Heart left ventricle (tissue), 16 donors: ENCODE measurements at regions of chr12 and their contacts with region 1.

Region 1: DNA sequence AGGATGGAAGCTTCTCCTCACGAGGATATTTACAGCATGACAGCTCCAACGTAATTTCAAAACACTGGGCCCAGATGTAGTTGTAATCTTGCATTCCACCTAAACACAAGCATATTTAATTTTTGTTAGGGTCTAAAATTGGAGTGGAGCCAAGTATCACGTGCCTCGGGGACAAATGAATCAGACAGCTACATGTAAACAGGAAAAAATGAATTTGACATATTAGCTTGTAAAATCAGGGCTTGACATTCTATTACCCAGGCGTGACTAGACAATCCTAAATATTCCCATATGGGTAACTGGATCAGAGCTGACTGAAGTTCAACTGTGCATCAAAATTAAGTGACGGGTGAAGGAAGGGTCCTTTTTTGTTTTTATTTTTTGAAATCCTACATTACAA is 59.0 kb downstream of the MDM2 start:
- DNase-seq: no peak
- ATAC-seq: no peak
- H3K4me3 ChIP-seq: no peak overlapping the region
- H3K27ac ChIP-seq: no peak overlapping the region
- H3K4me1 ChIP-seq: no peaks in the 10 kb centered on the region
- H3K27me3 ChIP-seq: no peaks in the 10 kb centered on the region
- CTCF ChIP-seq: no peak
- POLR2A ChIP-seq: no peak

Region 2: GRCh38 chr12:68786929-68787328 is 80.0 kb before region 1 on chr12:
- intact Hi-C with region 1: no loop called
- DNase-seq: no peak
- ATAC-seq: no peak
- H3K4me3 ChIP-seq: no peak overlapping the region
- H3K27ac ChIP-seq: peak overlapping the region in 9 of 12 donors; percentile 12 to 87 (median 44)
- H3K4me1 ChIP-seq: peaks cover 0 to 50% (median 0%) of the 10 kb centered on the region in 12 donors
- H3K27me3 ChIP-seq: no peaks in the 10 kb centered on the region
- CTCF ChIP-seq: no peak
- POLR2A ChIP-seq: no peak

Region 3: GRCh38 chr12:68932961-68933893 is 66.3 kb after region 1 on chr12 and contains the start of gene CPM:
- intact Hi-C with region 1: loop called in 1 of 10 experiments (anchors 10 kb)
- DNase-seq: peak; percentile 69 to 88 (median 77)
- ATAC-seq: peak; percentile 93 to 100 (median 98)
- H3K4me3 ChIP-seq: peak within 1 kb of the TSS; percentile 47 to 80 (median 73)
- H3K27ac ChIP-seq: peak within 1 kb of the TSS; percentile 20 to 81 (median 58)
- H3K4me1 ChIP-seq: peaks cover 0 to 26% (median 7%) of the 10 kb centered on the region in 12 donors
- H3K27me3 ChIP-seq: peaks cover 0 to 20% (median 2%) of the 10 kb centered on the region in 9 donors
- CTCF ChIP-seq: no peak
- POLR2A ChIP-seq: peak; percentile 71 to 93
- total RNA-seq, gene CPM: 2.0 to 25.4 (median 8.8) TPM

Region 4: DNA sequence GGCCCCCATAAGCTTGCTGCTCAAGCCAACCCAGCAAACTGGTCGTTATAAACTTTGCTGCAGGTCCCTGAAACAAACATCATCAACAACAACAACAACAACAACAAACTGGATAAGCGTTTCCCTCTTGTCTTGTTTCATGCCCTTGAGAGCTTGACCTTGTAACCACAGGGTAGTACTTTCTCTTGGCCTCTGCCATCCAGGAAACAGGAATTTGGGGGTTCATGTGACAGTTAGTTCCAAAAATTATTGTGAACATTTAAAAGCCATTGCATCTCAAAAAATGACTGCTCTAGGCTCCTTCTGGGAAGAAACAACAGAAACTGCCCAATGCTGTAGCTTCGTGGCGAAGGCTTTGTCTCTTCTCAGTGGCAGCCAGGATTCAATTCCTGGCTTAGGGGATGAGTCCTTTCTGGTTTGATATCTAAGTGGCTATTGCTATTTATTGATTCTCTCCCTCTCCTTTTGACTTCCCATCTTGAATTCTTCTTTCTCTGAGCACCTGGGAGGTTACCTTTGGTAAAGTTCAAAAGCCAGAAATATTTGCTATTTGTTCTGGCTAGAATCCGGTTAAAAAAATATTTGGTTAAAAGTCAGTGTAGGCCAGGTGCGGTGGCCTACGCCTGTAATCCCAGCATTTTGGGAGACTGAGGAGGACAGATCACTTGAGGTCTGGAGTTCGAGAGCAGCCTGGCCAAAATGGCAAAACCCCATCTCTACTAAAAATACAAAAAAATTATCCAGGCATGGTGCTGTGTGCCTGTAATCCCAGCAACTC is 118.0 kb after region 1 on chr12:
- intact Hi-C with region 1: no loop called
- DNase-seq: no peak
- ATAC-seq: no peak
- H3K4me3 ChIP-seq: no peak overlapping the region
- H3K27ac ChIP-seq: no peak overlapping the region
- H3K4me1 ChIP-seq: no peaks in the 10 kb centered on the region
- H3K27me3 ChIP-seq: no peaks in the 10 kb centered on the region
- CTCF ChIP-seq: no peak
- POLR2A ChIP-seq: no peak

Region 5: DNA sequence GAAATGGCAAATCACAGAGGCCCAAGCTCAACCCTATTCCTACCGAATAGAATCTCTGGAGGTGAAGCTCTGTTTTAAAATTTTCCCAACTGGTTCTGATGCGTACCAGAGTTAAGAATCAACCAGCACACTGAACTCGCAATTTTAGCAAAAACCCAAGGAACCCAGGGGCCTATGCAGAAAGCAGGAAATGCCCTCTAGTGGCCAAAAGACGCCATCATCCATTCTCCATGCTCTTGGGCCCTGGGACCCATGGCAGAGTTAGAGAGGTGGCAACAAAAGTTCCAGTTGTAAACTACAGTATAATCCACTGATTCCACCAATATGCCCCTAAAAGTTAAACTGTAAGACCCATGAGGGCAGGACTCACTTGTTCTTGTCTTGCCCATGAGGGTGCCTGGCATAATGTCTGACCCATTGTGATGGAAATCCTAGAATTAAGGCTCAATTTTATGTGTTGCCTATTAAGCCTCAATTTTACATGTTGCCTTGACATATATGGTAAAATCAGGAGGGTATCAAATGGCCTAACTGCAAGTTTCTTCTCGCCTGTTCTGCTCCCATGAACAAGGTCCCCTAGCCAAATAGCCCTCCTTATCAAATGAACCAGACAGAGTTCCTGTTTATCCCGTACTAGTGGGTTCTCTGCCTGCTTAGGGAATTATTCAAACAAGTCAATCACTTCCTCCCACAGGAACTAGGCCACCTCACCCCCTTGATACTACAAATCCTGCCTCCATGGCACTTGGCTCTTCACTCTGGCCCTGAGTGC is 203.6 kb after region 1 on chr12:
- intact Hi-C with region 1: loop called (anchors 1 to 5 kb)
- DNase-seq: peak in 4 of 5 donors; percentile 43 to 59 (median 48)
- ATAC-seq: peak in 3 of 4 donors; percentile 68 to 83 (median 80)
- H3K4me3 ChIP-seq: no peak overlapping the region
- H3K27ac ChIP-seq: no peak overlapping the region
- H3K4me1 ChIP-seq: peaks cover 0 to 8% (median 0%) of the 10 kb centered on the region in 12 donors
- H3K27me3 ChIP-seq: no peaks in the 10 kb centered on the region
- CTCF ChIP-seq: peak; percentile 73 to 91 (median 86)
- POLR2A ChIP-seq: no peak

Region 6: GRCh38 chr12:69254046-69254445 is 387.1 kb after region 1 on chr12:
- intact Hi-C with region 1: loop called in 1 of 10 experiments (anchors 10 kb)
- DNase-seq: no peak
- ATAC-seq: peak; percentile 42 to 57 (median 48)
- H3K4me3 ChIP-seq: no peak overlapping the region
- H3K27ac ChIP-seq: no peak overlapping the region
- H3K4me1 ChIP-seq: peaks cover 0 to 45% (median 12%) of the 10 kb centered on the region in 12 donors
- H3K27me3 ChIP-seq: no peaks in the 10 kb centered on the region
- CTCF ChIP-seq: peak; percentile 58 to 77 (median 66)
- POLR2A ChIP-seq: no peak